GM13977 (cell line): ENCODE measurements at regions of chr20 and their contacts with region 1.

Region 1: GRCh38 chr20:45090481-45090880 is 10.4 kb downstream of the KCNS1 start:
- DNase-seq: no peak
- CTCF ChIP-seq: no peak

Region 2: GRCh38 chr20:45044084-45044573 is 46.4 kb before region 1 on chr20:
- in situ Hi-C with region 1: loop called (anchors 5 kb)
- DNase-seq: peak; percentile 35
- CTCF ChIP-seq: peak; percentile 74

Region 3: DNA sequence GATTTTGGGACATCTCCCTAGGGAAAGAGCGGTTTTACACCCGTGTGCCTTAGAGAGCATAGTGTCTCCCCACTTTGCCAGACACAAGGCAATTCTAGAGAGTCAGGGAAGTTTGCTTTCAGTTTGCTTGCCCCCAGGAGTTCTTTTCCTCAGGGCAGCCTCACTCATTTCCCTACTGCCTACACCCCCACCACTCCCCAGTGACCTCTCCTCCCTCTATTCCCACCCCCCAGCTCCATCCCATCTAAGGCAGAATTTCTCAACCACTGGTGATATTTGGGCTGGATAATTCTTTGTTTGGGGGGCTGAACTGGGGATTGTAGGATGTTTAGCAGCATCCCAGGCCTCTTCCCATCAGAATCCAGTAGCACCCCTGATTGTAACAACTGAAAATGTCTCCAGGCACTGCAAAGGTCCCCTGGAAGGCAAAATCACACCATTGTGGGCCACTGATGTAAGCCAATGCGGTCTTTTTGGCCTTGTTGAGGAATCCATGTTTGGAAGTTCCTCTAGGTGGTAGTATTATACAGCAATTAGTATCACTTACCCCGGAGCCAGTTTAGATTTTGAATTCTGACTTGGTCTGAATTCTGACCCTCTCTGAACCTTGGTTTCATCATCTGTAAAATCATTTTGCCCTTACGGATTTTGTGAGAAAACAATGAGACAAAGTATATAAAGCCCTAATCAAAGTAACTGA is 455.4 kb after region 1 on chr20:
- in situ Hi-C with region 1: no loop called
- DNase-seq: no peak
- CTCF ChIP-seq: peak; percentile 22